CD4-positive, alpha-beta T cell (primary cell): ENCODE measurements at regions of chr9 and their contacts with region 1.

Region 1: GRCh38 chr9:127877566-127877998 is at the start of gene AK1:
- DNase-seq: no peak
- ATAC-seq: no peak
- H3K4me3 ChIP-seq: no peak within 1 kb of the TSS
- H3K4me3 Mint-ChIP-seq: no peak within 1 kb of the TSS
- H3K27ac ChIP-seq: no peak within 1 kb of the TSS
- H3K27ac Mint-ChIP-seq: no peak within 1 kb of the TSS
- H3K4me1 ChIP-seq: peaks cover 9% of the 10 kb centered on the region
- H3K4me1 Mint-ChIP-seq: no peaks in the 10 kb centered on the region
- H3K27me3 ChIP-seq: peaks cover 5 to 6% of the 10 kb centered on the region in 2 experiments
- H3K27me3 Mint-ChIP-seq: no peaks in the 10 kb centered on the region
- CTCF ChIP-seq: no peak
- total RNA-seq, gene AK1: 46.7 to 52.6 TPM

Region 2: GRCh38 chr9:127910613-127911205 is 33.1 kb after region 1 on chr9:
- CTCF ChIA-PET with region 1: interaction called, 9 read pairs
- POLR2A ChIA-PET with region 1: interaction called, 3 read pairs
- intact Hi-C with region 1: loop called (anchors 5 kb)
- DNase-seq: peak in 4 of 14 experiments; percentile 21 to 50 (median 46)
- ATAC-seq: no peak
- H3K4me3 ChIP-seq: no peak overlapping the region
- H3K4me3 Mint-ChIP-seq: peak overlapping the region; percentile 12
- H3K27ac ChIP-seq: no peak overlapping the region
- H3K27ac Mint-ChIP-seq: peak overlapping the region; percentile 72
- H3K4me1 ChIP-seq: peaks cover 41% of the 10 kb centered on the region
- H3K4me1 Mint-ChIP-seq: peaks cover 31% of the 10 kb centered on the region
- H3K27me3 ChIP-seq: no peaks in the 10 kb centered on the region
- H3K27me3 Mint-ChIP-seq: no peaks in the 10 kb centered on the region
- CTCF ChIP-seq: peak; percentile 60

Region 3: GRCh38 chr9:128011071-128011817 is 133.7 kb after region 1 on chr9:
- CTCF ChIA-PET with region 1: no interaction called
- POLR2A ChIA-PET with region 1: no interaction called
- intact Hi-C with region 1: no loop called
- DNase-seq: no peak
- ATAC-seq: no peak
- H3K4me3 ChIP-seq: no peak overlapping the region
- H3K4me3 Mint-ChIP-seq: no peak overlapping the region
- H3K27ac ChIP-seq: no peak overlapping the region
- H3K27ac Mint-ChIP-seq: peak overlapping the region; percentile 67
- H3K4me1 ChIP-seq: peaks cover 55% of the 10 kb centered on the region
- H3K4me1 Mint-ChIP-seq: peaks cover 61% of the 10 kb centered on the region
- H3K27me3 ChIP-seq: no peaks in the 10 kb centered on the region
- H3K27me3 Mint-ChIP-seq: no peaks in the 10 kb centered on the region
- CTCF ChIP-seq: no peak